Activated CD4-positive, alpha-beta T cell treated with anti-CD3 and anti-CD28 coated beads, Interleukin-2, amount 10 ng/mL, durations not matched to agents 24 days and 14 days (primary cell): ENCODE measurements at regions of chr14 and their contacts with region 1.

Region 1: DNA sequence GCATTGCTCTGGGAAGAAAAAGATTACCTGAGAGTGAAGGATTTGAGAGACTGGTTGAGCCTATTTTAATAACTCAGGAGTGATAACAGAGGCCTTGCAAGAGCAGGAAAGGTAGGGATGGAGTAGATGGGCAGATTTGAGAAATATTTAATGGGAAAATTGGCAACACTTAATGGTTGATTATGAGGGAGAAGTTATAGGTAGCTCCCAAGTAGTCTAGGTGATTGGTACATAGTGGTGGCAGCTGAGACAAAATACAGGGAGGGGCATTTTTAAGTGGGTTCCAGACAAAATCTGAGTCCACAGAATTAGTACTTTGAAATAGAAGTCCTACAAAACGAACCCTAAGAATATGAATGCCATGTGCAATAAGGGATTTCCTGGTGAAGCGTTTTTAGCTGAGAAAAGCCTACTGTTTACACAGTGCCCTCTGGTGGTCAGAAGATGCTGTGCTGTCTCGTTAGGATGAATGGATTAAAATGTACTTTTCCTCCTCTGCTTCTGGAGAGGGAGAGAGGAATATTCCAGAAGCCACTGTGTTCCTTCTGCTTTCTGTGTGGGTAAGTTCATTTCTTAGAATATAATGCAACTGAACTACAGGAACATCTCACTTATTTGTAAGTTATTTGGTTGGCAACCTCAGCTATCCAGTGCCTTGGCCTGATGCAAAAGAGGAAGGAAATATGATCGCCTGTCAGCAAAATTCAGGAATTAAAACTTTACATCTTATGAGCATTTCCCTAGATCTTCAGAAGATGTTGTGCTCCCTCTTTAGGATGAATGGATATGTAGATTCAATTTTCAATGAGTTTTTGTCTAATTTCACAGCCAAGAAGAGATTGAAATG is 6.5 kb downstream of the ZBTB1 start:
- DNase-seq: peak; percentile 92
- H3K4me3 Mint-ChIP-seq: peak overlapping the region; percentile 58
- H3K27ac Mint-ChIP-seq: peak overlapping the region; percentile 84
- H3K4me1 Mint-ChIP-seq: peaks cover 59% of the 10 kb centered on the region
- H3K27me3 Mint-ChIP-seq: no peaks in the 10 kb centered on the region

Region 2: DNA sequence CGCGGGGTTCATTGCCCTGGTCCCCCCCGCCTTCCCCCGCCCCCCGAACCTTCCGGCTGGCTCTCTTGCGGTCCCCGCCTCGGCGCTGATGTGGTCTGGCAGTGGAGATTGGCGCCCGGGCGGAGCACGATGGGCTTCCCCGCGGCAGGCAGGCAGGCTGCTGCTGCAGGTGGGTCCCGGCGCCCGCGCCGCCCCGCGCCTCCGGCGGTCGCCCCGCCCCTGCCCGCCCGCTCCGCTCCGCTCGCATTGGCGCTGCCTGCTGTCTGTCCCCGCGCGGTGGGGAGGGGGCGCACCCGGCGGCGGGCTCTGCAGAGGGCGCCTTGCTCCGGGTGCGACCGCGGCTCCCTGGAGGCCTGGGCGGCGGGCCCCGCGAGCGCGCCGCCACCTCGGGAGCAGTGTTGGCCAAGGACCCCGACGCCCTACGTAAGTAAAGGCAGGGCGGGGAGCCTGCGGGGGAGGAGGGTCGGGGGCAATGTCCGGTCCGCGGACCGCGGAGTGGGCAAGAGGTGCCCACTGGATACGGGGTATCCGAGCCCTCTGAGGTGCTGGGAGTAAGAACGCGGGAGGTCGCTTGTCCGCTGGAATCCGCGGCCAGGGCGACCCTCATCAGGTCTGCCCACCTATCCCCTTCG is 45.7 kb before region 1 on chr14 and contains the start of gene AKAP5:
- intact Hi-C with region 1: loop called (anchors 2 kb)
- DNase-seq: peak; percentile 90
- H3K4me3 Mint-ChIP-seq: peak within 1 kb of the TSS; percentile 86
- H3K27ac Mint-ChIP-seq: peak within 1 kb of the TSS; percentile 79
- H3K4me1 Mint-ChIP-seq: peaks cover 33% of the 10 kb centered on the region
- H3K27me3 Mint-ChIP-seq: peaks cover 5% of the 10 kb centered on the region
- total RNA-seq, gene AKAP5: 0.90 and 0.98 TPM in 2 replicates

Region 3: DNA sequence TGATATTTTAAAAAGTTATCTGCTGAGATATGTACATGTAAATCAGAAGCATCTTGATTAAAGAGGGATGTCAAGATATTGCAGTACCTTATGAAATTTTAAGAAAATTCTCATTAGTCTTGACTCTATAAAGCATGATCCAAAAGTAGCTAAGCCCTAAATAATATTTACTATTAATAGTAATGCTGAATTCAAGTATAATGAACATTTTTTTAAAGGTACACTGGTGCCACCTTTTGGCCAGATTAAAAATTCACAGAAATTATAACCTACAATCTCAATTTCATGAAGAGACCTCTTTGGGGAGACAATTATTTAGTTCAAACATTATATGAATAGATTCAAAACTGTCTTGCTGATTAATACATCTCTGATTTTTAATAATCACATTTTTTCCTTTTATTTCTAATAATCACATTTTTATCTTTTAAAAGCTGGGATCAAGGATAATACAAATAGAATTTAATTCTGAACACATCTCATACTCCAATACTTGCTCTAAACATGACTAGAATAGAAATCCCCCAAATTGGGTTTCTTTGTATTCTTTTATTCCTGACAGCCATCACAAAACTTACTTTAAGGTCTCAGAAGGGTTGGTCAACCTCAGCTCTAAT is 32.3 kb before region 1 on chr14:
- intact Hi-C with region 1: no loop called
- DNase-seq: peak; percentile 61
- H3K4me3 Mint-ChIP-seq: no peak overlapping the region
- H3K27ac Mint-ChIP-seq: no peak overlapping the region
- H3K4me1 Mint-ChIP-seq: peaks cover 7% of the 10 kb centered on the region
- H3K27me3 Mint-ChIP-seq: no peaks in the 10 kb centered on the region